ENCODE measurements at regions of chr17 and their contacts with region 1.

Region 1: DNA sequence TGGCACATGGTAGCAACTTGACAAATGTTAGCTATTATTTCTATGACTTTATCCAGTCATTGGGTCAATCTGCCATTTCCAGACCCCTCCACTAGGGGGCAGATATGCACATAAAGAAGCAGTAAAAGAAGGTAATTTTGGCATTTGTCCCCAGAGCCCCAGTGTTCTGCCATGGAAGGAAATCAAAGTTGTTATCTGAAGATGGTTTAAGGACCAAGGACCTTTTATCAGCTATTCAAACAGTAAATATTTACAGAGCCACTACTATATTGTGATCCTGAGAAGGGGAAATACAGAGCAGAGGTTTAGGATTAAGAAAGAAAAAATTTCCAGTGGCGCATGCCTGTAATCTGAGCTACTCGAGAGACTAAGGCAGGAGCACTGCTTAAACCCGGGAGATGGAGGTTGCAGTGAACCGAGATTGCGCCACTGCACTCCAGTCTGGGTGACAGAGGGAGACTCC is 20.0 kb downstream of the TRAF4 start:
- DNase-seq: peak; percentile 85 to 86
- H3K4me3 ChIP-seq: no peak overlapping the region
- H3K27ac ChIP-seq: no peak overlapping the region
- H3K4me1 ChIP-seq: peaks cover 0 to 29% (median 20%) of the 10 kb centered on the region in 4 donors
- H3K27me3 ChIP-seq: no peaks in the 10 kb centered on the region
- CTCF ChIP-seq: peak in 5 of 7 experiments; percentile 53 to 89 (median 87)
- EP300 ChIP-seq: no peak
- POLR2A ChIP-seq: no peak

Region 2: DNA sequence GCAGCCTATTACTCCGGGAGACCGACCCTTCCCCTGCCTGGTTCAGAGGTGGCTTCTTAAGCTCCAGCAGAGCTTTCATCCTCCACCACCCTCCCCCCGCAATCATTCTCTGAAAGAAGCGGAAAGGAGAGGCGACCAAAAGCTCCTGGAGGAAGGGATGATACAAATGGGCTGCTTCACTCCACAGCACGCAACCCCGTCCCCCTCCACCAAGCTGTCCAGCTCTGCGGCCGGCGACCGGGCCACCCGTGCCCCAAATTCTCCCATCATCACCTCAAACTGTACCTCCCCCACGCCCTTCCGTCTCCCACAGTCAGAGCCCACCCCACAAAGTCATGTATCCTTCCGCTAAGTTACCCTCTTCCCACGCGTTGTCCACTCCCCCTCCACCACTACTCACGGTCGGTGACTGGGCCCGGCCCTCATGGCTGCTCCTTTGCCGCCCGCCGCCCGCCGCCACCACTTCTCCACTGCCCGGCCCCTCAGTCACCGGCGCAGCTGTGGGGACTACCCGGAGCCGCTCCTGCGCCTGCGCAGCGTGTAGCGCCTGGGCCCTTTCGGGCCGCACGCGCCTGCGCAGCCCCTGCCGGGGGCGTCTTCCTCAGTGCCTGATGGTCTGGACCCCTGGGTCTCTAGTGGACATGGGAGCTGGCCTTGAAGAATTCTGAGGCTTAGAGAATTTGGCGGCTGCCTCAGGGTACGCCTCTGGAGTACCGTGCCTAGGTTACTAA is 78.6 kb after region 1 on chr17 and contains the start of gene FAM222B:
- intact Hi-C with region 1: loop called (anchors 10 kb)
- DNase-seq: peak; percentile 84 to 96
- H3K4me3 ChIP-seq: peak within 1 kb of the TSS; percentile 72 to 98 (median 84)
- H3K27ac ChIP-seq: peak within 1 kb of the TSS; percentile 79 to 90 (median 84)
- H3K4me1 ChIP-seq: peaks cover 0 to 31% (median 21%) of the 10 kb centered on the region in 4 donors
- H3K27me3 ChIP-seq: no peaks in the 10 kb centered on the region
- CTCF ChIP-seq: no peak
- EP300 ChIP-seq: no peak
- POLR2A ChIP-seq: peak in 1 of 4 donors; percentile 68
- total RNA-seq, gene FAM222B: 5.5 to 29.6 (median 14.0) TPM

Region 3: DNA sequence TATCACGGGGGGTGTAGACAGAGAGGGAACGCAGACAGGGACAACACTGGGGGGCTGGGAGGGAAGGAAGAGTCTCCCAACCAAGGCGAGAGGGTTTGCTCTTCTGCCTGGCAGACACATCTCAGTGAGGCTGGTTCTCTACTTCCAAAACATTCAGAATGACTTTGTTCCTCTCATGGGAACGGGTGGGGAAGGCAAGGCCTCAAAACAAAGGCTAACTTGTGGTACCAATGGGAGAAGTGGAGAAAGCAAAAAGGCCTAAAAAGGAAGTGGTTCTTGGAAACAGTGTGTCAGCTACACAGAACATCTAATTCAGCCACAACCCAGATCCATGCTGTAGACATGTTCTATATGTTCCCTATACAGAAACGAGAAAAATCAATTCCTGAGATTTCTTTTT is 126.2 kb after region 1 on chr17:
- intact Hi-C with region 1: loop called (anchors 10 kb)
- DNase-seq: no peak
- H3K4me3 ChIP-seq: no peak overlapping the region
- H3K27ac ChIP-seq: peak overlapping the region in 1 of 5 donors; percentile 28
- H3K4me1 ChIP-seq: peaks cover 5 to 55% (median 19%) of the 10 kb centered on the region in 4 donors
- H3K27me3 ChIP-seq: no peaks in the 10 kb centered on the region
- CTCF ChIP-seq: no peak
- EP300 ChIP-seq: no peak
- POLR2A ChIP-seq: no peak